Esophagus muscularis mucosa (tissue), 4 donors: ENCODE measurements at regions of chr12 and their contacts with region 1.

Region 1: GRCh38 chr12:118372541-118373495 is at the start of gene TAOK3:
- DNase-seq: peak; percentile 100
- H3K4me3 ChIP-seq: peak within 1 kb of the TSS; percentile 84 to 95 (median 88)
- H3K27ac ChIP-seq: peak within 1 kb of the TSS; percentile 88 to 96 (median 92)
- H3K4me1 ChIP-seq: peaks cover 40 to 63% (median 59%) of the 10 kb centered on the region in 4 donors
- H3K27me3 ChIP-seq: peaks cover 0 to 5% (median 0%) of the 10 kb centered on the region in 4 donors
- CTCF ChIP-seq: no peak
- EP300 ChIP-seq: no peak
- POLR2A ChIP-seq: peak; percentile 82
- total RNA-seq, gene TAOK3: 34.6 to 44.9 (median 39.6) TPM

Region 2: GRCh38 chr12:117820216-117820907 is 552.5 kb before region 1 on chr12:
- intact Hi-C with region 1: no loop called
- DNase-seq: no peak
- H3K4me3 ChIP-seq: no peak overlapping the region
- H3K27ac ChIP-seq: no peak overlapping the region
- H3K4me1 ChIP-seq: no peaks in the 10 kb centered on the region
- H3K27me3 ChIP-seq: peaks cover 0 to 32% (median 0%) of the 10 kb centered on the region in 4 donors
- CTCF ChIP-seq: no peak
- EP300 ChIP-seq: no peak
- POLR2A ChIP-seq: no peak

Region 3: DNA sequence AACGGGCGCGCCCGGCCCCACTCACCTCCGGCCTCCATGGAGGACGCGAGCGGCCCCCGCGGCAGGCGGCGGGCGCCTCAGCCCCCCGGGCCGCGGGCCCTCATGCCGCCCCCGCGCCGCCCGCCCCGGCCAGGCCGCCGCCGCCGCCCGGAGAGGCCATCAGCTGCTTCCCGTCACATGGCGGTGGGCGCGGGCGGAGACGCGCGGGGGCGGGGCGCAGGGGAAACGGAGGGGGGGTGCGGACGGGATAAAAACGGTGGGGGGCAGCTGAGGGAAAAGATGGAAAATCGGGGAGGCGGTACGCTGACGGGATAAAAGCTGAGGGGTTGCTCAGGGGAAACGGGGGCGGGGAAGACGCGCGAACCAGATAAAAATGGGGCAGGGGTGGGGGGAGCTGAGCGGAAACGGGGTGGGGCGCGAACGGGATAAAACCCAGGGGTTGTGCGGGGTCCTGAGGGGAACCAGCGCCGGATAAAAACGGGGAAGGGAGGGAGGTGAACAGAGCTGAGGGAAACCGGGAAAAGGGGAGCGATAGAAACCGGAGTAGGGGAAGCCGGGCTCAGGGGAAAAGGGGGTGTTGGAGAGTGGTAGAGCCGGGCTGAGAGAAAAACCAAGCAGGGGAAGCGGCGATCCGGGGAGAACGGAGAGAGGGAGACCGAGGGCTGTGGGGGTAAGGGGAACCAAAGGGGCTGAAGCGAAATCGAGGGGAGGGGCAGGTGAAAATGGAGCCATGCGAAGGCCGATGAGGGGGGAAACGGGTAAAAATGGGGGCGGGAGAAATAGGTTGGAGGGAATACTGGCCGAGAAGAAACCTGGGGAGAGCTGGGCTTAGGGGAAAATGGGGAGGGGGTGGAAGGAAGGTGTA is 311.6 kb before region 1 on chr12 and contains the start of gene WSB2:
- intact Hi-C with region 1: loop called (anchors 5 kb)
- DNase-seq: peak; percentile 94
- H3K4me3 ChIP-seq: peak within 1 kb of the TSS; percentile 79 to 87 (median 82)
- H3K27ac ChIP-seq: peak within 1 kb of the TSS; percentile 96 to 97 (median 96)
- H3K4me1 ChIP-seq: peaks cover 22 to 60% (median 44%) of the 10 kb centered on the region in 4 donors
- H3K27me3 ChIP-seq: no peaks in the 10 kb centered on the region
- CTCF ChIP-seq: no peak
- EP300 ChIP-seq: no peak
- POLR2A ChIP-seq: no peak
- total RNA-seq, gene WSB2: 68.5 to 87.7 (median 81.7) TPM

Region 4: GRCh38 chr12:118120579-118121363 is 252.0 kb before region 1 on chr12:
- intact Hi-C with region 1: loop called (anchors 5 kb)
- DNase-seq: peak; percentile 93
- H3K4me3 ChIP-seq: no peak overlapping the region
- H3K27ac ChIP-seq: peak overlapping the region; percentile 6 to 44 (median 13)
- H3K4me1 ChIP-seq: peaks cover 4 to 11% (median 7%) of the 10 kb centered on the region in 4 donors
- H3K27me3 ChIP-seq: no peaks in the 10 kb centered on the region
- CTCF ChIP-seq: peak; percentile 35 to 81 (median 74)
- EP300 ChIP-seq: no peak
- POLR2A ChIP-seq: no peak

Region 5: GRCh38 chr12:118183705-118184104 is 189.1 kb before region 1 on chr12:
- intact Hi-C with region 1: loop called (anchors 2 kb)
- DNase-seq: no peak
- H3K4me3 ChIP-seq: no peak overlapping the region
- H3K27ac ChIP-seq: no peak overlapping the region
- H3K4me1 ChIP-seq: peaks cover 20 to 57% (median 50%) of the 10 kb centered on the region in 4 donors
- H3K27me3 ChIP-seq: no peaks in the 10 kb centered on the region
- CTCF ChIP-seq: no peak
- EP300 ChIP-seq: no peak
- POLR2A ChIP-seq: no peak

Region 6: DNA sequence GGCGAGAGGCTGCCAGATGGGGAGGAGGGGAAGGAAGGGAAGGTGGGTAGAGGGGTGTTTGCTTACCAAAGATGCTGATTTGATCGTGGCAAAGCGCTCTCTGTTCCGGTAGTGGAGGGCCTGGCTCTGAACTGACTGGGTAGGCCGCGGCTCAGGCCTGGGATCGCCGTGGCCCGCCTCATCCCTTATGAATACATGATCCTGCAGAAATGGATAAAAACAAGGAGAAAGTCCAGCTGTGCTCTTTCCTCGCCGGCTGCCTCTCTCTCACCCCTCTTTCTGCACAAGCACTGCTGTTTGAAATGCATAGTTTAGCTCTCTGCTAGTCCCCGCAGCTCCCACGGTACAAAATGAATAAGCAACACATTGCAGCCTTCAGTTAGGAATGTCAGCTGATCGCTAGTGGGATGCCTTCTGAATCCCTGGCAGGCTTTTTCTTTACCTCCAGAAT is 183.1 kb before region 1 on chr12:
- intact Hi-C with region 1: loop called (anchors 2 kb)
- DNase-seq: no peak
- H3K4me3 ChIP-seq: peak overlapping the region; percentile 47 to 61 (median 53)
- H3K27ac ChIP-seq: peak overlapping the region; percentile 72 to 86 (median 78)
- H3K4me1 ChIP-seq: peaks cover 24 to 55% (median 47%) of the 10 kb centered on the region in 4 donors
- H3K27me3 ChIP-seq: no peaks in the 10 kb centered on the region
- CTCF ChIP-seq: no peak
- EP300 ChIP-seq: no peak
- POLR2A ChIP-seq: no peak

Region 7: DNA sequence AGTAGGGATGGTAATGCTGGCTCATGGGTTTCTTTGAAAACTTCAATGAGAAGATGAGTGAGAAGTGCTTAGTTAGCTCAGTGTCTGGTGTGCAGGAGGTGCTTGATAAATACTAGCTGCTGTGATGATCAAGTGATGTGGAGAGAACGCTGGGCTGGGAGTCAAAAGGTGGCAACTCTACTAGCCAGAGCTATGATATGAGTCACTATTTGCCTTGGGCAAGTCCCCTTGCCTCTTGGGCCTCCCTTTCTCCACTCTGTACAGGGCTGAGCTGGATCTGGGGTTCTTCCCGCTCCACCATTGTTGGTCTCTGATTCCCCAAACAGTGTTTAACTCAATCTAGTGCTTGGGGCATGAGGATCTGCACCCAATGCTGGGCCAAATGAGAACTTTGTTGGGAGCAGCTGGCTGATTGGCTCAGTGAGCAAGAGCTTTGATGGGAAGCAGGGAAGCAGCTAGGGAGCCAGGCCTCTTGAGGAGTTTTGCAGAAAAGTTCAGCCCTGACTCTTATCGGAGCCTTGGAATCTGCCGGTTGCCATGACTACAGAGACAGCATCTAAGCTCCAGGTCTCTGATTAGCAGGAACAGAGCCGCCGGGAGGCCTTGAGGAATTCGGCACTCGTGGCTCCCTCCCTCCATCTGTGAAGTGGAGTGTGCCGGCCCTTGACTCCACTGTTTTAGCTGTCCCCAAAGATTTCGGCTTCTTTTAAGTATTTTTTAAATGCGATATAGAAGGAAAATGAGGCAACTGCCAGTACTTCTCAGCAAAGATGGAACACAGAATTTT is 723.8 kb after region 1 on chr12:
- intact Hi-C with region 1: no loop called
- DNase-seq: no peak
- H3K4me3 ChIP-seq: no peak overlapping the region
- H3K27ac ChIP-seq: no peak overlapping the region
- H3K4me1 ChIP-seq: no peaks in the 10 kb centered on the region
- H3K27me3 ChIP-seq: peaks cover 0 to 59% (median 0%) of the 10 kb centered on the region in 4 donors
- CTCF ChIP-seq: no peak
- EP300 ChIP-seq: no peak
- POLR2A ChIP-seq: no peak